Natural killer cell (primary cell): ENCODE measurements at regions of chr3 and their contacts with region 1.

Region 1: DNA sequence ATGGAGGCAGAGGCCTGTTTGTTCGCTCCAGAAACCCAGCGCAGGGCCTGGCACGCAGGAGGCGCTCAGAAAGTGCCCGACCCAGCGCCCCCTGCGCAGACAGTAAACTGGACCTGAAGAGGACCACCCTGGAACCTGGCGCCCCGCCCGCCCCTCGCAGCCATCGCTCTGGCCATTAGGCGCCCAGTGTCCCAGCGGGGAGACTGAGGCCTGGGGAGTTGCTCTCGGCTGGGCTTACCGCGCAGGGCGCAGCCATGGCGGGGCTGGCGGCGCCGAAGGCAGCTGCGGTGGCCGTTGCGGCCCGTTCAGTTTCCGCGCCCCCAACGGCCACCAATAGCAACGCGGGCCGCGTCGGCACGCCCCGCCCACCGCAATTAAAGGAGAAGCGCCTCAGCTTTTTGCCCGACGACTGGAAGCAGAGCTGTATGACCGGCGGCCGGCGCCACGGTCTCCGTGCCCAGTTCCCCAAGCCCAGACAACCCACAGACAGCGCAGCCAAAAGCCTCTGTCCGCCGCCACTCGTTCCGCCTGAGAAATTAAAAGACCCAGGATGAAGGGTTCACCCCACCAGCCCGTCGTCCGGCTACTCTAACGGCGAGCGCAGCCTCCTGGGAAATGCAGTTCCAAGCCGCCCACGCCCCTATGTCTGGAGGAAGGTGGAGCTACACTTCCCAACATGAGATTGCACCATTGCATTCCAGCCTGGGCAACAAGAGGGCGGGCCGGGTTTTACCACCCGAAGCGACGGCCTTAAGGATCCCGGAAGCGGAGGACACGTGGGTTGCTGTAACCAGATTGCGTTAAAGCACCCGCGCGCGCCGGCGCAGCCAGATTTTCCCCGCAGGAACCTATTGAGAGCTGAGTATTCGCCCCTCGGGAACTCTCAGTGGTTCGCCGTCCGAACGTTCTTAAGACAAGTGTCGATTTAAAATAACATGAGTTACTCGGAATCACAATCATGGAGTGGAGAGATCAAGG is at the start of gene POC1A:
- DNase-seq: peak; percentile 89 to 91
- ATAC-seq: peak; percentile 89 to 92 (median 91)
- H3K4me3 ChIP-seq: peak within 1 kb of the TSS; percentile 88
- H3K4me3 Mint-ChIP-seq: peak within 1 kb of the TSS; percentile 95
- H3K27ac ChIP-seq: peak within 1 kb of the TSS; percentile 71
- H3K27ac Mint-ChIP-seq: peak within 1 kb of the TSS; percentile 87 to 96
- H3K4me1 ChIP-seq: peaks cover 16% of the 10 kb centered on the region
- H3K4me1 Mint-ChIP-seq: peaks cover 10 to 14% of the 10 kb centered on the region in 2 donors
- H3K27me3 ChIP-seq: no peaks in the 10 kb centered on the region
- H3K27me3 Mint-ChIP-seq: no peaks in the 10 kb centered on the region
- CTCF ChIP-seq: peak; percentile 27
- total RNA-seq, gene POC1A: 1.3 to 2.6 (median 2.4) TPM

Region 2: GRCh38 chr3:50850639-50851511 is 1303.5 kb before region 1 on chr3:
- intact Hi-C with region 1: no loop called
- DNase-seq: no peak
- ATAC-seq: no peak
- H3K4me3 ChIP-seq: no peak overlapping the region
- H3K4me3 Mint-ChIP-seq: no peak overlapping the region
- H3K27ac ChIP-seq: no peak overlapping the region
- H3K27ac Mint-ChIP-seq: no peak overlapping the region
- H3K4me1 ChIP-seq: no peaks in the 10 kb centered on the region
- H3K4me1 Mint-ChIP-seq: no peaks in the 10 kb centered on the region
- H3K27me3 ChIP-seq: no peaks in the 10 kb centered on the region
- H3K27me3 Mint-ChIP-seq: peaks cover 9 to 29% of the 10 kb centered on the region in 2 donors
- CTCF ChIP-seq: no peak

Region 3: DNA sequence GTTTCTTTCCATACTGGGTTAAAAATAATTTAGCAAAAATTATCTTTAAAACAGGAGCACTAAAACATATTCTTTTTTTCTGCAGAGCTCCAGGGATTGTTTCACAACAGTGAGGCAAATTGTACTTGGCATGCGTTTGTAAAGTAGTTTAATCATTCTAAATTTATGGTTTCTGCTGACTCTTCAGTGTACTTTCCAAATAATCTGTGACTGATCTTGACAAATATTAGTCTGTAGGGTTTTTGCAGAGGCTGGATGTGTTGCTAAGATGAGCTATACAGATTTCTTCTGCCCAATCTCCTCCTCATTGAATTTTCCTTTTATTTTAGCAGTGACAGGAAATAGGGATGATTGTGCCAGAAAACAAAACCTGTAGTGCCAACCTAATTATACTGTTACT is 1097.3 kb before region 1 on chr3:
- intact Hi-C with region 1: no loop called
- DNase-seq: no peak
- ATAC-seq: no peak
- H3K4me3 ChIP-seq: no peak overlapping the region
- H3K4me3 Mint-ChIP-seq: no peak overlapping the region
- H3K27ac ChIP-seq: no peak overlapping the region
- H3K27ac Mint-ChIP-seq: no peak overlapping the region
- H3K4me1 ChIP-seq: no peaks in the 10 kb centered on the region
- H3K4me1 Mint-ChIP-seq: no peaks in the 10 kb centered on the region
- H3K27me3 ChIP-seq: no peaks in the 10 kb centered on the region
- H3K27me3 Mint-ChIP-seq: peaks cover 6 to 15% of the 10 kb centered on the region in 2 donors
- CTCF ChIP-seq: no peak

Region 4: GRCh38 chr3:52056968-52057805 is 97.2 kb before region 1 on chr3:
- intact Hi-C with region 1: loop called (anchors 1 kb)
- DNase-seq: peak; percentile 97 to 99
- ATAC-seq: peak; percentile 84 to 93 (median 87)
- H3K4me3 ChIP-seq: peak overlapping the region; percentile 49
- H3K4me3 Mint-ChIP-seq: peak overlapping the region; percentile 93
- H3K27ac ChIP-seq: peak overlapping the region; percentile 73
- H3K27ac Mint-ChIP-seq: peak overlapping the region; percentile 92 to 93
- H3K4me1 ChIP-seq: peaks cover 56% of the 10 kb centered on the region
- H3K4me1 Mint-ChIP-seq: peaks cover 38 to 43% of the 10 kb centered on the region in 2 donors
- H3K27me3 ChIP-seq: no peaks in the 10 kb centered on the region
- H3K27me3 Mint-ChIP-seq: peaks cover 0 to 2% of the 10 kb centered on the region in 2 donors
- CTCF ChIP-seq: no peak

Region 5: GRCh38 chr3:52197842-52198668 is 43.6 kb after region 1 on chr3 and contains the start of gene ALAS1:
- intact Hi-C with region 1: loop called (anchors 1 kb)
- DNase-seq: peak; percentile 97
- ATAC-seq: peak; percentile 98
- H3K4me3 ChIP-seq: peak within 1 kb of the TSS; percentile 93
- H3K4me3 Mint-ChIP-seq: peak within 1 kb of the TSS; percentile 95
- H3K27ac ChIP-seq: peak within 1 kb of the TSS; percentile 76
- H3K27ac Mint-ChIP-seq: peak within 1 kb of the TSS; percentile 96 to 98
- H3K4me1 ChIP-seq: peaks cover 35% of the 10 kb centered on the region
- H3K4me1 Mint-ChIP-seq: peaks cover 21 to 40% of the 10 kb centered on the region in 2 donors
- H3K27me3 ChIP-seq: no peaks in the 10 kb centered on the region
- H3K27me3 Mint-ChIP-seq: no peaks in the 10 kb centered on the region
- CTCF ChIP-seq: no peak
- total RNA-seq, gene ALAS1: 17.0 to 34.5 (median 33.4) TPM